ENCODE measurements at regions of chr7 and their contacts with region 1.

Region 1: GRCh38 chr7:6706677-6707544 is at the start of gene ZNF12:
- DNase-seq: peak; percentile 98
- total RNA-seq, gene ZNF12: 17.7 TPM

Region 2: GRCh38 chr7:6577365-6578113 is 129.4 kb before region 1 on chr7 and contains the start of gene ZDHHC4:
- intact Hi-C with region 1: loop called (anchors 5 kb)
- DNase-seq: peak; percentile 92
- total RNA-seq, gene ZDHHC4: 34.3 TPM

Region 3: GRCh38 chr7:6729492-6730342 is 22.8 kb after region 1 on chr7:
- intact Hi-C with region 1: loop called (anchors 1 kb)
- DNase-seq: peak; percentile 95

Measured in cardiac septum (tissue), 1 donor.